ENCODE measurements at regions of chr10 and their contacts with region 1.

Region 1: GRCh38 chr10:62610649-62611229 is 193.8 kb upstream of the ADO start:
- H3K4me3 ChIP-seq: no peak overlapping the region
- H3K27ac ChIP-seq: no peak overlapping the region
- H3K4me1 ChIP-seq: no peaks in the 10 kb centered on the region
- CTCF ChIP-seq: no peak

Region 2: DNA sequence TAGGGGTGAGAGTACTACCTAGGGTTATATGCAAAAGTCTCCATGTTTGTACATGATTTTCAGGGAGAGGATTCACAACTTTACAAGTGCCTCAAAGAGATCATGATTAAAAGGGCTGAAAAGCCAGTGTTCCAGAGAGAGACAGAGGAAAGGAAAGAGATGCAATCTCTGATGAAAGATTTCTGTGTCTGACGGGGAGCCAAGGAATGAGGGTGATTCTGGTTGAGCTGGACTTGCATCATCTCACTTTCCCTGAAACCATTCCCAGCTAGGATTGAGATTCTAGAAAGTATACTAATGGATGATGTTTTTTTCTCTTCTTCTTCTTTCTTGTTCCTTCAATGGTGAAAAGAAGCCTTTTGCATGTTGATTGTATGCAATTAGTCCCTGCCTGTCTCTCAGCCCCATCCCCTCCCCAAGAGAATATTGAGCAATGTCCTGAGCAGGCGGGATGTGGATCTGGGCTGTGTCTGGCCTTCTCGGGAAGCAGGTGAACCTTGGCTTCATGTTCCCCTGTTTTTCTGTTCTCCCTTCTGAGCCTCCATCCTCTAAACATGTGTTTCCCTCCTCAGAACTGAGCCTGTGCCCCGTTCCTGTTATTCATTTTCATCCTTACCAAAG is 50.4 kb before region 1 on chr10:
- CTCF ChIA-PET with region 1: no interaction called
- POLR2A ChIA-PET with region 1: no interaction called
- H3K4me3 ChIP-seq: no peak overlapping the region
- H3K27ac ChIP-seq: no peak overlapping the region
- H3K4me1 ChIP-seq: no peaks in the 10 kb centered on the region
- CTCF ChIP-seq: no peak

Region 3: DNA sequence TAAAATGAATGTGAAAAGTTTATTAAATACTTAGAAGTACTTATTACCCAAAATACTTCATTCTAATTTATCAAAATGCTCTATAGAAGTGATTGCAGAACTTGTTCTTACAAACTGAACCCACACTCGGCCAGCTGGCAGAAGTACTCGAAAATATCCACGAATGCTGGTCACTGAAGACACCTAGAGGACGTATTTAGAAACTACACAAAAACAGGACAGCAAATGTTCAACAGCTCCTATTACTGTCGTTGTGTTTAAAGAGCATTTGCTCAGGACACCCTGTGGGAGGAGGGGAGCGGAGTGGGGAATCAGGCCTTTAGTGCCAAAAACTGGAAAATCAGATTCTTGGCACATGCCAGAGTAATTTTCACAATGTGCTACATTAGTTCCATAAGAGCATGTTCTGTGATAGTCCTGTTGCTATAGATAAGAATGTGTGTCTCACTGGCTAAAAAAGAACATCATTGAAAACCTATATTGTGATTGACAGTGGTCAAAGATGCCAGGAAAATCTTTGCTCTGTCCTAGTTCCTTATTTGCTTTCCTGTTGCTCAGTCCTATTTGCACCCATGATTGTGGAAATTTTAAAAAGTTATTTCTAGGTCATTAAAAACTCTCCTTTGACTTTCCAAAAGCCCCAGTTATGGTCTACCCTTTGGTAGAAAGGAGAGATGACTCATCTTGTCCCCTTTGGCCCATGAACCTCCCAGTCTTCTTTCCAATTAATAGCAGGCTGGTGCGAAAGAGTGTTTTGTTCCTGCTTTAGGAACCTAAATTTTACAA is 473.4 kb after region 1 on chr10:
- CTCF ChIA-PET with region 1: interaction called, 12 read pairs
- POLR2A ChIA-PET with region 1: no interaction called
- H3K4me3 ChIP-seq: no peak overlapping the region
- H3K27ac ChIP-seq: no peak overlapping the region
- H3K4me1 ChIP-seq: no peaks in the 10 kb centered on the region
- CTCF ChIP-seq: peak; percentile 59